Dorsolateral prefrontal cortex (tissue), 120 donors: ENCODE measurements at regions of chr7 and their contacts with region 1.

Region 1: DNA sequence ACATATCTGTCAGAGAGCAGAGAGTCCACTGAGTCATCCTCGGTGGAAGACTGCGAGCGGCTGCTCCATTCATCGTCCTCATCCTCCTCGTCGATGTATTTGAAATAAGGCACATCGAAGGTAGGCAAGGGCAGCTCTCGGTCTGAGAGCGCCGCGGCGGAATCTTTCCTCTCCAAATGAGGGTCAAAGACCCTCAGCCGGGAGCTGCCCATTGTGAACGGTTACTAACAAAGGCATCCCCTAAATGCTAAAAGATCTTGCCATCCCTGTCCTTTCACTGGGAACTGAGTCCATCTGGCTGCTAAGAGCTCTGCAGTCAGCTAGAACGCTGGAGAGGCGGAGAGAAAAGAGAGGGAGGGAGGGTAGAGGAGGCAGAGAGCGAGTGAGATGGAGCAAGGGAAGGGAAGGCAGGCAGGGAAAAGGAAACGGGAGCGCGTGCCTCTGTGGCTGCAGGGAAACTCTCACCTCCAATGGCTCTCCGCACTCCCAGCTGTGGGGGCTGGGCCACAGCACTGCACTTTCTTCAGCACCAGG is 163.4 kb downstream of the RAPGEF5 start:
- DNase-seq: peak; percentile 42 to 83 (median 76)
- H3K4me3 ChIP-seq: peak overlapping the region; percentile 51 to 94 (median 71)
- H3K27ac ChIP-seq: peak overlapping the region; percentile 2 to 96 (median 91)
- H3K27me3 ChIP-seq: no peaks in the 10 kb centered on the region
- CTCF ChIP-seq: peak in 9 of 56 donors; percentile 12 to 40 (median 25)

Region 2: GRCh38 chr7:22061775-22062174 is 131.7 kb before region 1 on chr7:
- intact Hi-C with region 1: no loop called
- DNase-seq: no peak
- H3K4me3 ChIP-seq: no peak overlapping the region
- H3K27ac ChIP-seq: no peak overlapping the region
- H3K27me3 ChIP-seq: peaks cover 0 to 33% (median 0%) of the 10 kb centered on the region in 45 donors
- CTCF ChIP-seq: no peak

Region 3: GRCh38 chr7:22110227-22110839 is 83.2 kb before region 1 on chr7:
- intact Hi-C with region 1: loop called (anchors 5 to 10 kb)
- DNase-seq: peak; percentile 36 to 92 (median 76)
- H3K4me3 ChIP-seq: peak overlapping the region in 15 of 59 donors; percentile 4 to 56 (median 22)
- H3K27ac ChIP-seq: peak overlapping the region; percentile 35 to 100 (median 99)
- H3K27me3 ChIP-seq: no peaks in the 10 kb centered on the region
- CTCF ChIP-seq: peak; percentile 75 to 99 (median 90)

Region 4: DNA sequence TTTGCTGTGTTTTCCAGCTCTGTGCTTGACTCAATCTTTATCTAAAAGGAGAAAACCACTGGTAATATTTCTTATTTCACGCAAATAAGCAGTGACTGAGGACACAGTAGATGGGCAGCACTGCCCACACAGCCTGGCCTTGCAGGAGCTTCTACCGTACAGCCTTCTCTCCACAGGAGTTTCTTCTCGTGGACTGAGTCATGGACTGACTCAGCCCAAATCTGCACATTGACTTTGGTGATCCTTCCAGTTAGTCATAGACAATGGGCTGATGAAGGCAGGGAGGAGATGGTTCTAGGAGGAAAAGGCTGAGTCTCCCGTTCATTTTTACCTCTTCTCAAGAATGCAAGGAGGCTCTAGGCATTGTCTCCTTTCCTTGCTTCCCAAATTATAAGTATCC is 37.3 kb before region 1 on chr7:
- intact Hi-C with region 1: loop called (anchors 5 kb)
- DNase-seq: peak in 2 of 10 donors; percentile 43 to 68
- H3K4me3 ChIP-seq: peak overlapping the region in 1 of 59 donors; percentile 24
- H3K27ac ChIP-seq: peak overlapping the region in 58 of 59 donors; percentile 30 to 94 (median 84)
- H3K27me3 ChIP-seq: no peaks in the 10 kb centered on the region
- CTCF ChIP-seq: no peak

Region 5: DNA sequence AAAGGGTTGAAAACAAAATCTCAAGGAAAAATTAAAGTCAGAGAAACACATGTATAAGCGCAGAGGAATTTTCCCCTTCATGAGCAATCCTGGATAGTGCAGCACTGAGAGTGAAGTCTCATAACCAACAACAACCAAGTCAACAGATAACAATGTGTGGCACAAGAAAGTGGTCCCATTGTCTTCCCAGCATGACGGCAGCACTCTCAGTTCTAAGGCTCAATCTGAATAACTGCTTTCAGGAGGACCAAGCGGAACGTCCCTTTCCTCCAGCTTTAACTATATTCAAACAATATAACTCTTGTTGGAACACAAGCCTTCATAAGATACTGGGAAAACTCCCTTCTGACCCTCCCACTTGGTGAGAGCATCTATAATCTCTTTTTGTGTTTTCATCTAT is 25.5 kb after region 1 on chr7:
- intact Hi-C with region 1: loop called in 1 of 2 experiments (anchors 2 kb)
- DNase-seq: peak in 8 of 10 donors; percentile 56 to 88 (median 66)
- H3K4me3 ChIP-seq: peak overlapping the region in 58 of 59 donors; percentile 5 to 72 (median 46)
- H3K27ac ChIP-seq: peak overlapping the region; percentile 52 to 99 (median 93)
- H3K27me3 ChIP-seq: no peaks in the 10 kb centered on the region
- CTCF ChIP-seq: peak in 1 of 56 donors; percentile 18

Region 6: GRCh38 chr7:22255834-22256233 is 62.3 kb after region 1 on chr7:
- intact Hi-C with region 1: loop called (anchors 2 kb)
- DNase-seq: no peak
- H3K4me3 ChIP-seq: peak overlapping the region in 6 of 59 donors; percentile 6 to 38 (median 11)
- H3K27ac ChIP-seq: peak overlapping the region in 57 of 59 donors; percentile 7 to 97 (median 79)
- H3K27me3 ChIP-seq: no peaks in the 10 kb centered on the region
- CTCF ChIP-seq: peak in 11 of 56 donors; percentile 10 to 40 (median 21)

Region 7: DNA sequence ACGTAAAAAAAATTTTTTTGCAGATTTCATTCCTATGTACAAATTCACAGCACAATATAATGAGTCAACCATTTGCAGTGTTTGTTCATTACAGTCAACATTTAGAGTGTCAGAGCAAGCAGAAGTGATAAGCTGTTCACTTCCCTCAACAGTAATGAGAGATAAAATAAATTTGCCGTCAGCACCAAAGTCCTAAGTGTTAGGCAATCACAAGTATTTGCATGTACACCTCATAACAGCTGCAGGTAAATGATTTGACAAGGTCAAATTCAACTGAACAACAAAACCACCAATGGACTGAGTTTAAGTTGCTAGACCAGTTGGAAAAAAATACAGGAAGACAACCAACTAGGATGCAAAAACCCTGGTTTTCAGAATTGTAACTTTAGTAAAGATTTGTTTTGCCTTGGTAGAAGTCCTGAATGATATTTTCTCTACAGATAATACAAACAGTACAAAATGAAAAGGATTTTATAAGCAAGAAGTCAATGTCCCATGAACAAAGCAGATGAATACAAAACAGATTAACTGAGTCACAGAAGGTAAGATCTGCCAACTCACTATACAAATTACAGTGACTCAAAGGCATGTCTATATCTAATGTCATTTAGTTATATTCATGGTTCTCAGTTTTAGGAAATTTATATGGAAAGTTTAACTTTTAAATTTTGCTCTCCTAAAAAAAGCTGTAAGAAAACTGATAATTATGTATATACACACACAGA is 153.0 kb after region 1 on chr7:
- intact Hi-C with region 1: no loop called
- DNase-seq: no peak
- H3K4me3 ChIP-seq: no peak overlapping the region
- H3K27ac ChIP-seq: peak overlapping the region in 15 of 59 donors; percentile 6 to 60 (median 23)
- H3K27me3 ChIP-seq: no peaks in the 10 kb centered on the region
- CTCF ChIP-seq: no peak